KBM-7 (cell line): ENCODE measurements at regions of chr3 and their contacts with region 1.

Region 1: GRCh38 chr3:184874709-184875644 is 63.0 kb downstream of the VPS8 start:
- DNase-seq: peak; percentile 51

Region 2: GRCh38 chr3:185176750-185177359 is 301.9 kb after region 1 on chr3:
- in situ Hi-C with region 1: loop called (anchors 25 kb)
- DNase-seq: peak; percentile 61

Region 3: DNA sequence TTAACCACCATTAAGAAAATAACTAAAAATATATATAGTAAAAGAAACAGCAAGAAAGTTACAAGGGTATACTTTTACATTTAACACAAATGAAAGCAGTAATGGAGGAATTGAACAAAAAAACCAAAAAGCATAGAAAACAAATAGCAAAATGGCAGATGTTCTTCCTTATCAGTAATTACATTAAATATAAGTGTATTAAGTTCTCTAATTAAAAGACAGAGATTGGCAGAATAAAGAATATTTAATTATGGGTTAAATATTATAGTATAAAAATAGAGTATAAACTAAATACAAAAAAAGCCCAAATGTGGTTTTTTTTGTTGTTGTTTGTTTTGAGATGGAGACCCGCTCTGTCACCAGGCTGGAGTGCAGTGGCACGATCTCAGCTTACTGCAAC is 358.4 kb after region 1 on chr3:
- in situ Hi-C with region 1: no loop called
- DNase-seq: no peak

Region 4: GRCh38 chr3:185423178-185423577 is 548.2 kb after region 1 on chr3:
- in situ Hi-C with region 1: no loop called
- DNase-seq: peak; percentile 8